ENCODE measurements at regions of chr7 and their contacts with region 1.

Region 1: DNA sequence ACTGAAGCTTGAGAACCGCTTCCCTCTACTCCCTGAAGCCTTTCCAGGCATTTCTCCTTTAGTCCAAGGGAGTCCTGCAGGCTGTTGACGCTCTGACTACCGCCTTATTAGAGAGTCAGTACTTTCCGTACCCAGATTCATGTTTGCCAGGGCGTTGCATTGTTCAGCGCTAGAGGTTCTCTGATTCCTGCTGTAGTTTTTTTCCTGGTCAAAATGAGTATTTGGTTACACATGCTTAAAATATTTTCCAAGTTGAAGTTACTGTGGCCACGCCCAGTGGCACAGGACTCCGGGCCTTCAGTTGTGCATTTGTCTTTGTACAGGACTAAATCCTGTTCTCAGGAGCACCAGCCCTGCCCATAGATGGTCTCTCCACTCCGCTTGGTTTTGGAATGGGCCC is 7.9 kb downstream of the MTURN start:
- DNase-seq: peak in 1 of 2 donors; percentile 90
- H3K4me3 ChIP-seq: peak overlapping the region in 1 of 2 donors; percentile 29
- H3K27ac ChIP-seq: peak overlapping the region; percentile 51 to 74
- H3K4me1 ChIP-seq: peaks cover 12 to 39% of the 10 kb centered on the region in 2 donors
- H3K27me3 ChIP-seq: no peaks in the 10 kb centered on the region
- CTCF ChIP-seq: no peak

Region 2: DNA sequence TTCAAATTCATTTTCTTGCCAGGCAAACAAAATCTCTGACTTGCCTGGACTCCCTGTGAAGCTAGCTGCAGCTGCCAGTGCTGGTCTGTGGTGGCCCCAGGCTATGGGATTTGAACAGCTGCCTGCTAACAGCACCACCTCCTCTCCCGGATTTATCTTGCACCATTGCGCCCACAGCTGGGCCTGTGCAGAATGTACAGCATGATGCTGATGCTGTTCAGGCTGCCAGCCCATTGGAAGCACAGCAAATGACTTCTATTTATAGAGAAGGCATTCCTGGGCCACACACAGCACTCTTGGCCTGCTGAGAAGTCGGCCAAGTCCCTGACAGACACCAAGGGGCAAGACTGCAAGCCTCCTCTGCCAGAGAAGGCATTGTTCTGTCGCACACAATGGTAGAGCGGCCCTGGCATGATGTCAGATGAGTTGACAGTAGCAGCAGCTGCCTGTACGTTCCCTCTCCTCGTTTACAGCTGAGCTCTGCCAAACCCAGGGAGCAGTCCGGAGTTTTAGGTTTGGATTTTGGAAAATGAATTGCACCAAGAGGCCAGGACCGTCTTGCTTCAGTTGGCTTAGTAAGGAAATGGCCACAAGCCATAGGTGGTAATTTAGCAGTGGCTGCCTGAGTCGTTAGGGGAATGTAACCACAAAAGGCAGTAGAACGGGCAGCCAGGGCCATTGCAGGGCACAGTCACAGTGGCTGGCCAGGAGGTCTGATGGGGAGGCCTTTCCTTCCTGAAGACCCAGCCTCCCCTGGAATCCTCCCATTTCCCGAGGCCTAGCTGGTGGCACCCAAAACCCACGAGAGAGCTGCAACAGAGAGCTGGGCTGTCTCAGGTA is 30.6 kb after region 1 on chr7:
- intact Hi-C with region 1: loop called (anchors 2 kb)
- DNase-seq: peak; percentile 40 to 90
- H3K4me3 ChIP-seq: peak overlapping the region in 1 of 2 donors; percentile 34
- H3K27ac ChIP-seq: peak overlapping the region; percentile 66 to 86
- H3K4me1 ChIP-seq: peaks cover 32 to 69% of the 10 kb centered on the region in 2 donors
- H3K27me3 ChIP-seq: no peaks in the 10 kb centered on the region
- CTCF ChIP-seq: peak in 1 of 3 experiments; percentile 35

Region 3: DNA sequence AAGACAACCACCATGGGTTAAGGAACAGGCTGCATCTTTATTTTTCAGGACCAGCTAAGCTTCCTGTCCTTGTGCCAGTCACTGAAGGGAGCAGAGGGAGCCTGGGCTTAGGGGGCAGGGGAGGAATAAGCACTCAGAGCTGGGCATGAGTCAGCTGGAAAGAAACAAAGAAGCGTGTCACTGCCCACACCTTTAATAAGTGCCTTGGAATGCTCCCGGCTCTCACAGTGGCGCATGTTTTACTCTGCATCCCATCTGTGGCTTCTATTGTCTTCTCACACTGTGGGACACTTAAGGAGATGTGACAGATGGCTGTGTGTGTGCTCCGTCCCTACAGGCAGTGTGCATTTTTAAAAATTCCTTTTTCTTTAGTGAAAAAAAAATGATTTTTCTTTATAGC is 63.8 kb after region 1 on chr7:
- intact Hi-C with region 1: no loop called
- DNase-seq: no peak
- H3K4me3 ChIP-seq: no peak overlapping the region
- H3K27ac ChIP-seq: no peak overlapping the region
- H3K4me1 ChIP-seq: no peaks in the 10 kb centered on the region
- H3K27me3 ChIP-seq: no peaks in the 10 kb centered on the region
- CTCF ChIP-seq: no peak